ENCODE measurements at regions of chr22 and their contacts with region 1.

Region 1: GRCh38 chr22:26330966-26331625 is 98.0 kb upstream of the ASPHD2 start:
- DNase-seq: peak; percentile 44
- H3K4me3 Mint-ChIP-seq: no peak overlapping the region
- H3K27ac Mint-ChIP-seq: no peak overlapping the region
- H3K4me1 Mint-ChIP-seq: peaks cover 5% of the 10 kb centered on the region
- H3K27me3 Mint-ChIP-seq: peaks cover 16% of the 10 kb centered on the region

Region 2: DNA sequence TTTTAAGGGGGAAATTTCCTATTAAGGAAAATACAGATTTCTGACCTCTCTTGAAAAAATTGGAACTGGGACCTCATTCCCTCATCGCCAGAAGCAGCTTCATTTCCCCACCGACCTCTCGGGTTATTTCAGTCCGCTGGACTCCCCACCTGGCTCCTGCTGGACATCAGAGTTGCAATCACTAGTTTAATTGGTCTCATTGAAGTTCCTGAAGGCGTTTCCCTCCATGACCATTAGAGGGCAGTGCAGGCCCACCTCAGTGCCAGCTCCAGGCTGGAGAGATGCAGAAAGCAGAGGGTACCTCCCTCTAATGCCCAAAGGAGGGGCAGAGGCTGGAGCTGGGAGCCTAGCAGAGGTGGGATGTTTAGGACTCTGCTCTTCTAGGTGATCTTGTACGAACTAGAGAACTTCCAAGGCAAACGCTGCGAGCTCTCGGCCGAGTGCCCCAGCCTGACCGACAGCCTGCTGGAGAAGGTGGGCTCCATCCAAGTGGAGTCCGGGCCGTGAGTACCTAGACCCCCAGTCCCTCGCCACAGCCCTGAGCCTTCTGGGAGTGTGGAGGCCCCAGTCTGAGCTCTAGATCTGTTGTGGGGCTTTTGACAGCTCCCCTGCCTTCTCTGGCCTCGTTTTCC is 1128.7 kb before region 1 on chr22:
- intact Hi-C with region 1: loop called (anchors 1 kb)
- DNase-seq: peak; percentile 24
- H3K4me3 Mint-ChIP-seq: no peak overlapping the region
- H3K27ac Mint-ChIP-seq: no peak overlapping the region
- H3K4me1 Mint-ChIP-seq: peaks cover 6% of the 10 kb centered on the region
- H3K27me3 Mint-ChIP-seq: no peaks in the 10 kb centered on the region

Region 3: DNA sequence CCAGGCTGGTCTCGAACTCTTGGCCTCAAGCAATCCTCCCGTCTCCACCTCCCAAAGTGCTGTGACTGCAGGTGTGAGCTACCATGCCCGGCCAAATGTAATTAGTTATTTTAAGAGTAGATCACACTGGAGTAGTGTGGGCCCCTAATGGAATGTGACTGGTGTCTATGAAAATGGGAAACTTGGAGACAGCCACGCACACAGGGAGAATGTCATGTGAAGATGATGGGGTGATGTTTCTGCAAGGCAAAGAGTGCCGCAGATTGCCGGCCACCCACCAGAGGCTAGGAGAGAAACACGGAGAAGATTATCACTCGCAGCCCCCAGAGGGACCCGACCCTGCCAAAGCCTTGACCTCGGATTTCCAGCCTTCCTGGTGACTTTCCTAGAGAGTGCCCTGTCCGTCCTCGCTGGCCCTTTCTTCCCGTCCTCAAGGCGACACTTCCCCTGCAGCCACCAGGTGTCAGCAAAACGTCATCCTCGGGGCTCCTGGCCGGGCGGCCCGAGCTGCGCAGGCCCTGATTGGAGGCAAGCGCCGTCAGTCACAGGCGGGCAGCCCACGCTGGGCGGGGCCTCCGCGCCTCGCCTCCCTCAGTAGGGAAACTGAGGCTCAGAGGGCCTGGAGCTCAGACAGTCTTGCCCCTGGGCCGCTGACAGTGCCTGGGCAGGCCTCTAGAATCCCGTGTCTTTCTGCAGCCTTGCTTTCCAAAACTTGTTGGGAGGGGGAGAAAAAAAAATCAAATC is 1095.4 kb before region 1 on chr22:
- intact Hi-C with region 1: loop called (anchors 2 kb)
- DNase-seq: peak; percentile 67
- H3K4me3 Mint-ChIP-seq: no peak overlapping the region
- H3K27ac Mint-ChIP-seq: no peak overlapping the region
- H3K4me1 Mint-ChIP-seq: peaks cover 4% of the 10 kb centered on the region
- H3K27me3 Mint-ChIP-seq: peaks cover 28% of the 10 kb centered on the region

Region 4: GRCh38 chr22:25680956-25681355 is 650.1 kb before region 1 on chr22:
- intact Hi-C with region 1: no loop called
- DNase-seq: no peak
- H3K4me3 Mint-ChIP-seq: no peak overlapping the region
- H3K27ac Mint-ChIP-seq: peak overlapping the region; percentile 4
- H3K4me1 Mint-ChIP-seq: peaks cover 29% of the 10 kb centered on the region
- H3K27me3 Mint-ChIP-seq: no peaks in the 10 kb centered on the region

Region 5: GRCh38 chr22:25777870-25778269 is 553.2 kb before region 1 on chr22:
- intact Hi-C with region 1: loop called (anchors 2 kb)
- DNase-seq: peak; percentile 8
- H3K4me3 Mint-ChIP-seq: no peak overlapping the region
- H3K27ac Mint-ChIP-seq: no peak overlapping the region
- H3K4me1 Mint-ChIP-seq: peaks cover 4% of the 10 kb centered on the region
- H3K27me3 Mint-ChIP-seq: no peaks in the 10 kb centered on the region

Region 6: DNA sequence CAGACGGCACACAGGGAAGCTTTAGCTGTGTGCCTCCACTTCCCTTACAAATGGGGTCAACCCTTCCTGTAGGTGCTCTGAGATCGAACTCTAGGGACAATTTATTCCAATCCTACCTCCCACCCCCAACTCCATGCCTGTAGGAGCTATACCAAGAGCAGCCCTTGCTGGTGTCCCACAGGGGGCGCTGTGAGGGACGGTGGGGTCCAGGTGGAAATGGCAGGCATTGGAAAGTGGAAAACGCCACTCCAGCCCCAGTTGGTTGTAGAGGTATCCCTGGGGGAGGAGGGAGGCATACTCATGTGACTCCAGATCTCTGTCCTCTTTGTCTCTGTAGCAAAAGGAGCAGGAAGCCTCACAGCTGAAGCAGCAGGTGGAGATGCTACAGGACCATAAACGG is 427.8 kb before region 1 on chr22:
- intact Hi-C with region 1: loop called (anchors 5 kb)
- DNase-seq: no peak
- H3K4me3 Mint-ChIP-seq: no peak overlapping the region
- H3K27ac Mint-ChIP-seq: no peak overlapping the region
- H3K4me1 Mint-ChIP-seq: no peaks in the 10 kb centered on the region
- H3K27me3 Mint-ChIP-seq: peaks cover 2% of the 10 kb centered on the region